ENCODE measurements at regions of chr9 and their contacts with region 1.

Region 1: DNA sequence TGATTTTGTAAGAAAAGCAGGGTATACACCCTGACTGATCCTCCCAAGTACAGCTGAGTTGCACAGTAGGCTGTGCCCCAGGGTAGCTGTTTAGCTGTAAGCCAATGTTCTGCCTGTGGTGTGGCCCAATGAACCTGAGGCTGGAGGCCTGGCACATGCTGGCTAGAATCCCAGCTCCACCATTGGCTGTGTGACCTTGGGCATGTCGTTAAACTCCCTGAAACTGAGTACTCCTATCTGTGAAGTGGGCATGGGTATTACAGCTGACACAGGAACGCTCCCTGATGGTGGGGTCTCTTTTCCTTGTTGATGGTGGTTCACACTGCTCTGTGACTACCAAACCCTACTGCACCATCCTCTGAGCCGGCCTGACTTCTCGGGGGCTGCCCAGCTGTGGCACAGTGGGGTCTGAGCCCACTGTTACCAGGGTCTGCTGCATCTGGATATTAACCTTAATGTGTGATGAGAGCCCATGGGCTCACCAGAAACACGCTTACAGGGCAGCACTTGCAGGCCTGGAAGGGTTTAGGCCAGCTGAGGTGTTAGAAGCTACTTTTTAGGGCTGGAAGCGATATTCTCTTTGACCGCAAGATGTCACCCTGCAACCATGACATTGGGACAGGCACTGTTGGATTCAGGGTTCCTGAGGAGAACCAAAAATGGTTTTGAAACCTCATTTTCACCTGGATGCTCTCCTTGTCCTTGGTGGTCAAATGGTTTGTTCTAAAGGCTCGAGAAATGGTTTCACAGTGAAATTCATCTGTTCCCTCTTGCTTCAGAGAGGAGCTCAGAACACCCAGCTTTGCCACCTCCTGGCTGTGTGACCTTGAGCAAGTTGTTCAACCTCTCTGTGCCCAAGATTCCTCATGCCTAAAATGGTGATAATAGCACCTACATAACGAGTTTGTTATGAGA is 6.8 kb upstream of the GADD45G start:
- DNase-seq: peak; percentile 58
- H3K4me3 ChIP-seq: no peak overlapping the region
- H3K27ac ChIP-seq: no peak overlapping the region
- H3K4me1 ChIP-seq: no peaks in the 10 kb centered on the region
- H3K27me3 ChIP-seq: peaks cover 5% of the 10 kb centered on the region in 2 experiments
- CTCF ChIP-seq: peak; percentile 68 to 69
- POLR2A ChIP-seq: no peak

Region 2: DNA sequence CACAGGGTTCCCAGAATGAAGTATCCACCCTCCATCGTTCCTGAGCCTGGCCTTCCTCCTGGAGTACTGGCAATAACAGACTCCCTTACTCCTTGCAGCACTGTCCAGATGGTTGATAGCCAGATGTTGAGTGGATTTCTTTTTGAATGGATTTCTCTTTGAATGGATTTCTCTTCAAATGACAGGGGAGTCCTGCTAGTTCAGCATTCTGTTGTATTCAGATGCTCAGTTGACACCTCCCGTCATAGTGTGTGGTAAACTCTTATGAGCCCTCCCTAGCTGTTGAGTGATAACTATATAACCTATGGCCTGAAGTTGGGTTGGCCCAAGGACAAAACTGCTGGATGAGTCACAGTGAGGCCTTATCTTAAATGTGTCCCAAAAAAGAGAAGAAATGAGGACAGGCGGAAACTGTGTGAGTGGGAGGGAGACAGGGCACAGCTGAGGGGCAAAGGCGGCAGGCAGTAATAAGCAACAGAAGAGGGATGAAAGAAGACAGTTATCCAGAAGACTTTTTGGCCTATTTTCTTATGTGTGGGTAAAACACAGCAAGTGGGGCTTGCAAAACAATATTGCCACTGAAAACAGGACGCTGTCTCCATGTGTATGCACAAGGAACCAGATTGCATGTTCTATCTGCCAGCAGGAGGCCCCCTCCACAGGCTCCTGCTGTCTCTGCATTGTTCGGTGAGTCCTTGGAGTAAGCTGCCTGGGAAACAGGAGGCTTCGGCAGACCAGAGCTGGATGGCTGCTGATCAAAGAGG is 816.2 kb before region 1 on chr9:
- CTCF ChIA-PET with region 1: no interaction called
- POLR2A ChIA-PET with region 1: no interaction called
- dilution Hi-C with region 1: no loop called
- intact Hi-C with region 1: no loop called
- DNase-seq: peak; percentile 70
- H3K4me3 ChIP-seq: no peak overlapping the region
- H3K27ac ChIP-seq: peak overlapping the region; percentile 28
- H3K4me1 ChIP-seq: peaks cover 31% of the 10 kb centered on the region
- H3K27me3 ChIP-seq: no peaks in the 10 kb centered on the region
- CTCF ChIP-seq: peak; percentile 50 to 71
- POLR2A ChIP-seq: no peak

Region 3: GRCh38 chr9:89613912-89614892 is 16.2 kb after region 1 on chr9:
- CTCF ChIA-PET with region 1: interaction called, 18 read pairs
- POLR2A ChIA-PET with region 1: no interaction called
- dilution Hi-C with region 1: no loop called
- intact Hi-C with region 1: no loop called
- DNase-seq: no peak
- H3K4me3 ChIP-seq: no peak overlapping the region
- H3K27ac ChIP-seq: no peak overlapping the region
- H3K4me1 ChIP-seq: no peaks in the 10 kb centered on the region
- H3K27me3 ChIP-seq: no peaks in the 10 kb centered on the region
- CTCF ChIP-seq: no peak
- POLR2A ChIP-seq: no peak

Region 4: DNA sequence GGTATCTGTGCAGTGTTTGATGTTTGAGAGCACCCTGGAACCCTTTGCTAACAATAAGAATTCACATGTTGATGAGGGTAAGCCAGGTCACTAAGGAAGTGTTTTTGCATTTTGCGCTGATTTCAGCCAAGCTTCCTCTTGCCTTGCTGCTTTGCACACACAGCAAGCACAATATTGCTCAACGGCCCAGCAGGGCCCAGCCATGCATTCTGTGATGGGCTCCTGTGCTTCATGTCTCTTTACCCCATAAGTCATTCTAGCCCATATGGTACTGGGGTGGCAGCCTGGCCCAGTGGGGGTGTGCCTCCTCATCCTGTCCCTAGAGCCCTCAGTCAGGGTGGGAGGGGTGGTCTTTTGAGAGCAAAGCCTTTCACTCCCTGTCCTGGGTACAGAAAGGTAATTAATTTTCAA is 488.1 kb after region 1 on chr9:
- CTCF ChIA-PET with region 1: interaction called, 15 read pairs
- POLR2A ChIA-PET with region 1: no interaction called
- dilution Hi-C with region 1: no loop called
- intact Hi-C with region 1: no loop called
- DNase-seq: no peak
- H3K4me3 ChIP-seq: no peak overlapping the region
- H3K27ac ChIP-seq: no peak overlapping the region
- H3K4me1 ChIP-seq: no peaks in the 10 kb centered on the region
- H3K27me3 ChIP-seq: no peaks in the 10 kb centered on the region
- CTCF ChIP-seq: no peak
- POLR2A ChIP-seq: no peak

Region 5: GRCh38 chr9:90102292-90102901 is 504.4 kb after region 1 on chr9:
- CTCF ChIA-PET with region 1: interaction called, 373 read pairs
- POLR2A ChIA-PET with region 1: no interaction called
- dilution Hi-C with region 1: no loop called
- intact Hi-C with region 1: loop called (anchors 1 kb)
- DNase-seq: peak; percentile 79
- H3K4me3 ChIP-seq: no peak overlapping the region
- H3K27ac ChIP-seq: no peak overlapping the region
- H3K4me1 ChIP-seq: no peaks in the 10 kb centered on the region
- H3K27me3 ChIP-seq: no peaks in the 10 kb centered on the region
- CTCF ChIP-seq: peak; percentile 62 to 74
- POLR2A ChIP-seq: no peak

Region 6: GRCh38 chr9:90642570-90643539 is 1044.9 kb after region 1 on chr9 and contains the start of gene DIRAS2:
- CTCF ChIA-PET with region 1: no interaction called
- POLR2A ChIA-PET with region 1: no interaction called
- dilution Hi-C with region 1: no loop called
- intact Hi-C with region 1: loop called (anchors 5 kb)
- DNase-seq: peak; percentile 30
- H3K4me3 ChIP-seq: no peak within 1 kb of the TSS
- H3K27ac ChIP-seq: no peak within 1 kb of the TSS
- H3K4me1 ChIP-seq: no peaks in the 10 kb centered on the region
- H3K27me3 ChIP-seq: peaks cover 3 to 8% of the 10 kb centered on the region in 2 experiments
- CTCF ChIP-seq: peak in 1 of 2 donors; percentile 5
- POLR2A ChIP-seq: no peak
- total RNA-seq, gene DIRAS2: not detected in 2 replicates

Region 7: DNA sequence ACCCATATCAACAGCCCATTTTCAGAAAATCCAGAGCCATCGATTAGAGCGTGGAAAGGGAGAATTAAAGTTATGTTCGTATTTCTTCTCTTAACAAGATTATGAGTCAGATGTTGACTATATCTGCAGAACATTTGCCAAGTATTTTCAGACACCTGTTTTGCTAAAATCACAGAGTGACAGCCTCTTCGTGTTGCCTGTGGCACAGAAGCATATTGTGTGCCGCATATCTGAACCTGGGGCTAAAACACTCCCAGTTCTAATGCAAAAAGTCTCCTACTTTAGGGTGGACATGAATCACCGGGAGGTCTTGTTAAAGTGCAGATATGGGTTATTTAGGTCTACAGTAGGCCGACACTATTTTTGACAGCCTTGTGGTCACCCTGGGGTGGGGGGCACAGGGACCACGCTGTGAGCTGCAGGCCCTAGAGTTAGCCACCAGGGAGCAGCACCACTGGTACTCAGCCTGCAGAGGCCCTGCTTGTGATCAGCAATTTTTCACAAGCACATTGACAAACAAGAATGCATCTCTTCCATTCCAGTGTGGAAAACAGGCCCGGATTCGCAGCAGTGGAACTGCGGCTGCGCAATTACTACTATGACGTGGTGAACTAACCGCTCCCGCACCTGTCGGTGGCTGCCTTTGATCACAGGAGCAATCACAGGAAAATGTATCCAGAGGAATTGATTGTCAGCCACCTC is 1297.2 kb after region 1 on chr9:
- CTCF ChIA-PET with region 1: interaction called, 29 read pairs
- POLR2A ChIA-PET with region 1: no interaction called
- dilution Hi-C with region 1: no loop called
- intact Hi-C with region 1: no loop called
- DNase-seq: peak; percentile 9
- H3K4me3 ChIP-seq: no peak overlapping the region
- H3K27ac ChIP-seq: no peak overlapping the region
- H3K4me1 ChIP-seq: no peaks in the 10 kb centered on the region
- H3K27me3 ChIP-seq: peaks cover 2 to 8% of the 10 kb centered on the region in 2 experiments
- CTCF ChIP-seq: peak; percentile 29 to 74
- POLR2A ChIP-seq: no peak